ENCODE measurements at regions of chr13 and their contacts with region 1.

Region 1: GRCh38 chr13:26698392-26699196 is 62.0 kb downstream of the GPR12 start:
- DNase-seq: peak; percentile 88
- H3K4me3 Mint-ChIP-seq: no peak overlapping the region
- H3K27ac Mint-ChIP-seq: no peak overlapping the region
- H3K4me1 Mint-ChIP-seq: peaks cover 4% of the 10 kb centered on the region
- H3K27me3 Mint-ChIP-seq: no peaks in the 10 kb centered on the region

Region 2: DNA sequence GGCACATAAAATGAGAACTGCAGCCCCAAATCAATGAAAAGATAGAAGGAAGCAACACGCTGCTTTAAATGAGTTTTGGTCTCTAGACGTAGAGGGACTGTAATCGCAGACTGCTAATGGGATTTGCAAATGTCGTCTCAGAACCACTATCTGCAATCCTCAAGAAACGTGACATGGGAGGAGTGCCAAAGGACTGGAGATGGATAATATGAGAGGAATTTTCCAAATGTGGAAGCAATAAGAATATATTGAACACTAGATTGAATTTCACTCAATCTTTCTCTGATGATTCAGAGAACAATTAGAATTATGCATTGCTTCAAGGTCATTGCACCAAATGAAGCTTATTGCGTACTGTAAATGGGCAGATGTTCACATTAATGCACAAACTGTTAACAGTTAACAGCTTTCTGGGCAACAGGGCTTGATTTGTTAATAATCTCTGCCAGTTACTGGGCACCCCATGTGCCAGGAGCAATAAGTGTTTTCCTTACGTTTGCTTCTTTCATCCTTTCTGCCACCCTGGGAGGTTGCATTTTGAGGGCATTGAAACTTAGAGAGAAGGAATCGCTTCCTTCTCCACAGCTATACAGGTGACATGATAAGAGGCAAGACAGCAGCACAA is 203.9 kb before region 1 on chr13:
- CTCF ChIA-PET with region 1: interaction called, 17 read pairs
- intact Hi-C with region 1: loop called (anchors 1 kb)
- DNase-seq: no peak
- H3K4me3 Mint-ChIP-seq: no peak overlapping the region
- H3K27ac Mint-ChIP-seq: no peak overlapping the region
- H3K4me1 Mint-ChIP-seq: no peaks in the 10 kb centered on the region
- H3K27me3 Mint-ChIP-seq: no peaks in the 10 kb centered on the region

Region 3: GRCh38 chr13:26688286-26688685 is 10.3 kb before region 1 on chr13:
- CTCF ChIA-PET with region 1: interaction called, 20 read pairs
- intact Hi-C with region 1: no loop called
- DNase-seq: no peak
- H3K4me3 Mint-ChIP-seq: no peak overlapping the region
- H3K27ac Mint-ChIP-seq: no peak overlapping the region
- H3K4me1 Mint-ChIP-seq: no peaks in the 10 kb centered on the region
- H3K27me3 Mint-ChIP-seq: peaks cover 2% of the 10 kb centered on the region

Region 4: DNA sequence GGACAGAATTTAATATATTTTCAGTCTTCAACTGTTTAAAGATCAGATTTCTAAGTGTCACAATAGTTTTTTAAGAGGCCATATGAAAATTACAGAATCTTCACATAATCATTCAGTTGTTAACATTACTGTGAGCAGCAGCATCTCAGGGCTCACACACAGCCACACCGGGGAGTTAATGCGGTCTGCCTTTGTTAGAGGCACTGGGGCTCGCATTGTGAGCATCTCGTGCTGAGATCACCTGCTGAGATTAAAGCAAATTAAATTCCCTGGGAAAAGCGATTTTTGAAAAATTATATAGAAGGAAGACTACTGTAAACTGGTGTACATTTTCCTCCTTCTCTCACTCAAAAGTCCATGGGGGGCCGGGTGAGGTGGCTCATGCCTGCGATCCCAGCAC is 45.4 kb after region 1 on chr13:
- CTCF ChIA-PET with region 1: no interaction called
- intact Hi-C with region 1: no loop called
- DNase-seq: no peak
- H3K4me3 Mint-ChIP-seq: no peak overlapping the region
- H3K27ac Mint-ChIP-seq: no peak overlapping the region
- H3K4me1 Mint-ChIP-seq: no peaks in the 10 kb centered on the region
- H3K27me3 Mint-ChIP-seq: peaks cover 21% of the 10 kb centered on the region